ENCODE measurements at regions of chr14 and their contacts with region 1.

Region 1: GRCh38 chr14:58968153-58968552 is 220.3 kb upstream of the DAAM1 start:
- DNase-seq: no peak
- CTCF ChIP-seq: no peak

Region 2: GRCh38 chr14:58954901-58955861 is 13.0 kb before region 1 on chr14:
- CTCF ChIA-PET with region 1: interaction called, 14 read pairs
- POLR2A ChIA-PET with region 1: no interaction called
- DNase-seq: peak; percentile 15
- CTCF ChIP-seq: no peak

Region 3: DNA sequence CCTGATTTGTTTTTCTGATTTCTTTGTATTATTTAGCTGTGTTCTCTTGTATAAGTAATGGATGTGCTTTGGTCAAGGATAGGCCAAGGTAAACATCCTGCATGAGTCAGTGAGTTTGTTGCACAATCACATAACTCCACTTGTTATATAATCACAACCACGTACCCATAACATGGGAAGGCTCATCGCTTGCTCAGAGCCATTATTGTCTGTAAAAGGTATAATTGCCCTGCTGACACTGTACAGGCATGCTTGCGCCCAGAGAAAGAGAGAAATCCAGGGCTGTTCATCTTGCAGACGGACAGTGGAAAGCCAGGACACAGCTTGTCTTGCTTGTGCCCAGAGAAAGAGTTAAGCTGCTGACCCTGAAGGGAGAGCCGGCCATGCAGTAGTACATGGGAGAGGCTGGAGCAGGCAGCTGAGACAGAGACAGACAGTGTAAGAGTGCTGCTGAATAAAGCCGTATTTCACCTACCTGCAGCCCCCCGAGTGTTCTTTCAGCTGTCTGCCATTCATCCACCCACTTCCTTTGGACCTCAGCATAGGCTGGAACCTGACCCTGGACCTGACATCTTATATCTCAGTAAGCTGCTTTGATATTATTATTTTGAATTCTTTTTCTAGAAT is 45.6 kb after region 1 on chr14:
- CTCF ChIA-PET with region 1: no interaction called
- POLR2A ChIA-PET with region 1: no interaction called
- DNase-seq: no peak
- CTCF ChIP-seq: no peak

Region 4: DNA sequence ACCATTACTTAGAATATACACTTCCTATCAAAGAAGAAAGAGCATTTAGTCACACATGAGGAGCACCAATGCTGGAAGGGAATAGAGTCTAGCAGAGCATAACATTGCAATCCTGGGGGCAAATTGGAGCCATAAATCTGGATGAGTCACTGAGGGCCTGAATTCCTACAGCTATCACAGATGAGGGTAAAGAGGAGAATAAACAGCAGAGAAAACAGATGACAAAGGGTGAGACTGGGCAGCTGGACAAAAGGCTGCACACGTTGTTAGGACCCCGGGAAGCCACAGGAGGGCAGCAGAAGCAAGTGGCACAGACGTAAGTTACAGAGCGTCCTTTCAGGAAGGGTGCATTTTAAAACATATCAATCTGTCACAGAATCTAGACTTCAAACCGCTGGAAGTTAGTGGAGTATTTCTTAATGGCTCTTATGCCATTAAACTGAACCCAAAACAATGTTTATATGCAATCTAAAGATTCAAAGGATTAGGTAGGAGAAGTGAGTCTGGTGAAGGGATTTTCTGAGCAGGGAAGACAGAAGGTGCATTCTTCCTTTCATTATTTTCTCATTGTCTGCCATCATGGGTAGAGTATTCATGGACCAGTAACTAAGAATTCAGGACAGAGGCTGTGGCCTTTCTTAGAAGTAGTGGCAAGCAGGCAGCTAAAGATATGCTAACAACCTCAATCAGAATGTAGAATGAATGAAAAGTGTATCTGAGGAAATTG is 60.5 kb after region 1 on chr14:
- CTCF ChIA-PET with region 1: no interaction called
- POLR2A ChIA-PET with region 1: no interaction called
- DNase-seq: peak; percentile 53
- CTCF ChIP-seq: peak; percentile 93